BJ (cell line): ENCODE measurements at regions of chr1 and their contacts with region 1.

Region 1: DNA sequence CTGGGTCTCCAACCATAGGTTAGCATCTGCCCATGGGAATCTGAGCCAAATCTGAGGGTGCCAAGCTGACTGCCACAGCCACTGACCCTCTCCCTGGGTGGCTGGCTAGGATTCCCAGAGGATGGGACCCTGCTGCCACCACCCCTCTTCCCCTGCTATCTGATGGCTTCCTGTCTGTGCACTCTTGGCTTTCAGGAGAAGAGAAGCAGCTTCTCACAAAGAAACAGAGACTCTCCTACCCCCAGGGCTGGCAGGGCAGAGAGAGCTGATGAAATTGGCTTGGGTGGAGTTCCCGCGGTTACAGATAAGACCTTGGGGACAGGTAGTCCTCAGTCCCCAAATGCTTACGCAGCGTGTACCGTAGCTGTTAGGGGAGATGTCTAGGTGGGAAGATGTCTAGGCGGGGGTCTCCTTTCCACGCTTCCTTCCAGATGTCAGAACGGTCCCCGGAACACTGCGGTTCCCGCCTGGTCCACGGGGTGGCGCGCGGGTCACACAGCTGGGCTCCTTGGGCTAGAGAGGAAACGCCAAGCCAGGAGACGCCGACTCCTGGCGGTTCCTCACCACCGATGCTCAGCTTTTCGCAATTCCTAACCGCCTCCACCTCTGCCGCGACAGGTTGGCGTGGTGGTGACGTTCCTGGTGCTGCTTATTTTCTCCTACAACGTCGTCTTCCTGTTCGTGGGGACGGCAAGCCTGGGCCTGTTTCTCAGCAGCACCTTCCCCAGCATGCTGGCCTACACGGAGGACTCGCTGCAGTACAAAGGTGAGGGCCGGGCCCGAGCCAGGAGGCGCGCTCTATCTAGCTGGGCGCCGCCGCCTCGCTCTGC is 40.1 kb downstream of the ELK4 start:
- DNase-seq: no peak
- H3K4me3 ChIP-seq: peak overlapping the region; percentile 37
- H3K27me3 ChIP-seq: no peaks in the 10 kb centered on the region
- CTCF ChIP-seq: peak; percentile 98

Region 2: DNA sequence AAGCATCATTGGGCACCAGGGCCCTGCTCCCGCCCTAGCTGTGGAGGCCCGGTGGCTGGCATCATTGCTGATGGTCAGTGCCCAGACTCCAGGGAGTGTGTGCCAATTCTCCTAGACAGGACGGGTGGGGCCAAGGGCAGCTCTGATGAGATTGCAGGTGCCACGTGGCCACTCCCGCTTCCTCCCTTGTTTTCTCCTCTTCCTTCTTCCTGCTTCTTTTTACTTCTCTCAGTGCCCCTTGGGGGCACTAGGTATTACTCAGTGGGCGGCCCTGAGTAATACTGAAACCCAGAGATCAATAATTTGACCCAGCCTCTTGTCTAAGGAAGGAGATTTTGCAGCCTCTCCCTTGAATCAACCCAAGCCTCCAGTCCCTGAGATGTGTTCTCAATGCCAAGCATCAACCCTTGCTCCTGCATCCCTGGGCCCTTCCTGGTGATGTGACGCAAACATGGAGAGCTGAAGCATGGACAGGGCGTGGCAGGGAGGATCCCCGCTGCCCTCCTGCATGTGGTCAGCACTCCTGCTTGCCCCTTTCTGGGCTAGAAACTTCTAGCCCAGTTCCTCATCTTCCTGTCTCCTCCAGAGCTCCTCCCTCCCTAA is 54.9 kb before region 1 on chr1:
- CTCF ChIA-PET with region 1: interaction called, 12 read pairs
- POLR2A ChIA-PET with region 1: no interaction called
- DNase-seq: no peak
- H3K4me3 ChIP-seq: no peak overlapping the region
- H3K27me3 ChIP-seq: no peaks in the 10 kb centered on the region; the same call in 1 of the 2 replicates
- CTCF ChIP-seq: no peak

Region 3: GRCh38 chr1:205578780-205579606 is 12.7 kb before region 1 on chr1:
- CTCF ChIA-PET with region 1: interaction called, 14 read pairs
- POLR2A ChIA-PET with region 1: no interaction called
- DNase-seq: no peak
- H3K4me3 ChIP-seq: no peak overlapping the region
- H3K27me3 ChIP-seq: peaks cover 52% of the 10 kb centered on the region
- CTCF ChIP-seq: no peak

Region 4: GRCh38 chr1:205620269-205620668 is 28.5 kb after region 1 on chr1:
- CTCF ChIA-PET with region 1: interaction called, 19 read pairs
- POLR2A ChIA-PET with region 1: no interaction called
- DNase-seq: no peak
- H3K4me3 ChIP-seq: no peak overlapping the region
- H3K27me3 ChIP-seq: no peaks in the 10 kb centered on the region
- CTCF ChIP-seq: no peak

Region 5: GRCh38 chr1:205645519-205645918 is 53.8 kb after region 1 on chr1:
- CTCF ChIA-PET with region 1: interaction called, 11 read pairs
- POLR2A ChIA-PET with region 1: no interaction called
- DNase-seq: no peak
- H3K4me3 ChIP-seq: no peak overlapping the region
- H3K27me3 ChIP-seq: no peaks in the 10 kb centered on the region
- CTCF ChIP-seq: no peak